ENCODE measurements at regions of chr3 and their contacts with region 1.

Region 1: GRCh38 chr3:38117748-38118420 is 19.0 kb downstream of the ACAA1 start:
- DNase-seq: peak; percentile 65
- ATAC-seq: peak; percentile 53
- H3K4me3 ChIP-seq: no peak overlapping the region
- H3K27ac ChIP-seq: peak overlapping the region; percentile 14
- H3K4me1 ChIP-seq: peaks cover 18% of the 10 kb centered on the region; the same call in 1 of the 2 replicates
- H3K27me3 ChIP-seq: peaks cover 0 to 8% of the 10 kb centered on the region in 2 experiments; a peak in 1 of 5 replicates
- CTCF ChIP-seq: peak; percentile 98
- EP300 ChIP-seq: no peak
- POLR2A ChIP-seq: peak; percentile 44 to 76; a peak in 3 of 4 replicates
- RAD21 ChIP-seq: peak; percentile 94

Region 2: DNA sequence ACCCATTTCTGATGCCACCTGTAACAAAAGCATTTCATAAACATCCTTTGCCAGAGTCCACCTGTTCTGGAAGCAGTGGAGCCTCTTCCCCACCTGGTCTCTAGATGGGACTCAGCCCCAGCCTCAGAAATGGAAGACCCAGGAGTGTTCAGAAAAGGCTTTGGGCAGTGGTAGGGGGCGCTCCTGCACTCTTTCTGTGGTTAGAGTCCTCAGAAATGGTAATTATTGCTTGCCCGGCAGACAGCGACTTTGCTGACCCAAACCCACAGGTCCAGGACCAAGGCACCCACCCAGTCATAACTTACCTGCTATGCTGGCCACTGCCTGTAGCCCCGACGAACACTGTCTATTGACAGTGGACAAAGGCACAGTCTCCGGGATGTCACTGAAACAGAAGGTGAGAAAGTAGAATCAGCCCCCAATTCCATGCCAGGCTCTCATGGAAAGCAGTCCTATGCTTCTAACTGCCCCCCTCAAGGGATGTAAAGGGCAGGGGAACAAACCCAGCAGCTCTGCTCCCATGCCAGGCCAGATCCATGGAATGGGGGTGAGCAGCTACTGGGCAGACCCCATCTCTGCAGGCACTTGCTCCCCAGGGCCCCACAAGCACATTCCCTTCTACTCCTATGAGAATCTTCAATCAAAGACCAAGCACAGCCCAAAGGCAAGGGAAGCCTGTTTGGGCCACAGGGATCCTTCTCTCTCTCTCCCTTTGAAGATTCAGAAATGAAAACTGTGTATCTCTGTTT is 13.9 kb after region 1 on chr3:
- CTCF ChIA-PET with region 1: no interaction called
- POLR2A ChIA-PET with region 1: interaction called, 87 read pairs
- in situ Hi-C with region 1: no loop called
- intact Hi-C with region 1: loop called (anchors 2 kb)
- DNase-seq: no peak
- ATAC-seq: peak; percentile 6; the same call in 2 of the 3 replicates
- H3K4me3 ChIP-seq: peak overlapping the region in 1 of 3 experiments; percentile 61; a peak in 2 of 6 replicates
- H3K27ac ChIP-seq: peak overlapping the region; percentile 97
- H3K4me1 ChIP-seq: peaks cover 86% of the 10 kb centered on the region
- H3K27me3 ChIP-seq: no peaks in the 10 kb centered on the region; a peak in 1 of 5 replicates
- CTCF ChIP-seq: peak; percentile 62
- EP300 ChIP-seq: no peak
- POLR2A ChIP-seq: no peak
- RAD21 ChIP-seq: peak; percentile 59; the same call in 1 of the 2 replicates

Region 3: DNA sequence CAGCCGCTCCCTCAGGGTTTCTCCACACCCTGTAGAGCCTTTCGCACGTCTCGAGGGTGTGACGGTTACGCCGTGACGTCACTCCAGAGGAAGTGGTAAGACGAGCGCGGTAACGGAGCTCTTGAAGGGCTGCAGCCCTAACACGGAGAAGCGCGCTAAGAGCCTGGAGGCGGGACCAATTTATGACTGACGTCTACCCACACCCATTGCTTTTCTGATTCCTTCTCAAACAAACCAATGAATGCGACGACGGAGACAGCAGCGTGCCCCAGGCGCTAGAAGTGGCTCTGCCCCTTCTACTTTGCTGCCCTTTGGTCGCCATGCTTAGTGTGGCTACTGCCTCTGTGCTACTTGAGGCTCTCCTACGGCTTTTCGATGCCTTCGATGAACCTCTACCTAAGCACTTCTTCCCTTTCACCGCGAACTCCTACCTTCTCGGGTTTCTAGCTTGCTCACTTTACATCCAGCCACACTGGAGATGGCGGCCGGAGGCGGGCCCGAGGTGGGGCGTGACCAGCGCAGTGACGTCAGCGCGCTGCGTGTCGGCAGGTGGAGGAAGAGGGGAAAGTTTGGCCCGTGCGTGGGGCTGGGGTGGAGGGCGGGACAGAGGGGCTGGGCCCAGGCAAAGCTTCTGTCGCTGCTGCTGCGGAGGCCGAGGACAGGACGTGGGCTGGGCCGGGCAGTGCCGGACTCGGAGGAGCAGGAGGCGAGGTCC is 47.2 kb after region 1 on chr3 and contains the start of gene OXSR1:
- CTCF ChIA-PET with region 1: no interaction called
- POLR2A ChIA-PET with region 1: interaction called, 25 read pairs
- in situ Hi-C with region 1: no loop called
- intact Hi-C with region 1: no loop called
- DNase-seq: peak; percentile 99
- ATAC-seq: peak; percentile 93
- H3K4me3 ChIP-seq: peak within 1 kb of the TSS; percentile 86 to 97 (median 90)
- H3K27ac ChIP-seq: peak within 1 kb of the TSS; percentile 96
- H3K4me1 ChIP-seq: peaks cover 48% of the 10 kb centered on the region
- H3K27me3 ChIP-seq: no peaks in the 10 kb centered on the region; a peak in 1 of 5 replicates
- CTCF ChIP-seq: 0 out of 2 replicates have a peak, but pooled peaks have one; percentile 0
- EP300 ChIP-seq: no peak; a peak in 1 of 4 replicates
- POLR2A ChIP-seq: peak; percentile 82 to 89
- RAD21 ChIP-seq: 0 out of 2 replicates have a peak, but pooled peaks have one; percentile 8
- total RNA-seq, gene OXSR1: 32.6 and 41.1 TPM in 2 replicates

Region 4: DNA sequence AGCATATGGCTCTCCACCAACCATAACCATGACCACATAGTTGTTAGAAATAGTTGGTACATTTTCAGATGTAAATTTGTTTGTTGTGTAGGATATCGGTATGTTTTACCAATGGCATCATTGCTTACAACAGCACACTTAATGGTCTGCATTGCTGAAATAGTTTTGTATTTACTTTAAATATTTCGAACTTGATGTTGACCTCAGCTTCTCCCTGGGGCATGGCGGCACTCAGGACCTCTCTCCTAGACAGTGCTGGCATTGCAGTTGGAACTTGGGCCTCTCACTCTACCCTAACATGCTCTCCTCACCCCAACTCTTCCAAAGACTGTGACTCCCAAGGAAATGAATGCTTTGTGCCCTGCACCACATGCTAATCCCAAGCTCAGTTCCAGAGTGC is 152.7 kb after region 1 on chr3:
- CTCF ChIA-PET with region 1: no interaction called
- POLR2A ChIA-PET with region 1: no interaction called
- in situ Hi-C with region 1: loop called (anchors 10 kb)
- intact Hi-C with region 1: no loop called
- DNase-seq: no peak
- ATAC-seq: no peak
- H3K4me3 ChIP-seq: no peak overlapping the region
- H3K27ac ChIP-seq: no peak overlapping the region
- H3K4me1 ChIP-seq: no peaks in the 10 kb centered on the region
- H3K27me3 ChIP-seq: peaks cover 0 to 4% of the 10 kb centered on the region in 2 experiments; a peak in 1 of 5 replicates
- CTCF ChIP-seq: no peak
- EP300 ChIP-seq: no peak
- POLR2A ChIP-seq: no peak
- RAD21 ChIP-seq: no peak

Region 5: DNA sequence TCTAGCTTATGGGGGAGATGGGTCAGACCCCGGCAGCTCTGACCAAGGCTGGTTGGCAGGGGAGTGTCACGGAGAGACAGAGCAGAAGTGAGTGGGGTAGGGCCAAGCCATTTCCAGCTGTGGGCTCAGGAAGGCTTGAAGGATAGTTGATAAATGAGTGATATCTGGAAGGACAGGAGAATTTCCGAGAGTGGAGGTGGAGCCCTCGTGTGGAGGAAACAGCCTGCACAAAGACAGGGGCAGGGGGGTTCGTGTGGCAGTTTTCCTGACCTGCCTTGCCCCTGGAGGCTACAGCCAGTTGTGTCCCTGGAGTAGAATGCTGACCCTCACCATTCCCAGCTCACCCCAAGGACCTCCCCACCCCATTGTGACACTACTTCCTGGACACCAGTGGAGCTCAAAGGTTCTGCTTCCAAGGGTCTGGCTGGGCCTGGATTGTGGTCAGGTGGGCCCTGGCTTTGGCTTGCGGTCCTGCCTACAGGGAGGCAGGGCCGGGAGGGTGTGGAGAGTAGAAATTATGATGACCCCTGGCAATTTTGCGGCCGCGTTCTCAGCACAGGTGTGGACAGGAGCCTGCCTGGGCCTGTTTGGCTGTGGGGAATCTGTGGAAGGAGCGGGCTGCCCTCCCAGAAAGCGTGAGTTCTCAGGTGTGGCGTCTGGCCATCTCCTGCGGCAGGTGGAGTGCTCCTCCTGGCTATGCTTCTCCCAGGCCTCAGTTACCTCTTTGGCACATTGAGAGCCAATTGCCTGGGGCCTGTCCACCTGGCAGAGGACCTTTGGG is 164.2 kb after region 1 on chr3 and contains the start of gene SLC22A14:
- CTCF ChIA-PET with region 1: no interaction called
- POLR2A ChIA-PET with region 1: no interaction called
- in situ Hi-C with region 1: loop called (anchors 10 kb)
- intact Hi-C with region 1: loop called (anchors 1 kb)
- DNase-seq: peak; percentile 16
- ATAC-seq: peak; percentile 89
- H3K4me3 ChIP-seq: no peak within 1 kb of the TSS
- H3K27ac ChIP-seq: no peak within 1 kb of the TSS
- H3K4me1 ChIP-seq: no peaks in the 10 kb centered on the region
- H3K27me3 ChIP-seq: peaks cover 0 to 19% of the 10 kb centered on the region in 2 experiments; a peak in 3 of 5 replicates
- CTCF ChIP-seq: peak; percentile 65
- EP300 ChIP-seq: no peak
- POLR2A ChIP-seq: no peak
- RAD21 ChIP-seq: peak; percentile 25; the same call in 1 of the 2 replicates
- total RNA-seq, gene SLC22A14: not detected in 2 replicates

Region 6: DNA sequence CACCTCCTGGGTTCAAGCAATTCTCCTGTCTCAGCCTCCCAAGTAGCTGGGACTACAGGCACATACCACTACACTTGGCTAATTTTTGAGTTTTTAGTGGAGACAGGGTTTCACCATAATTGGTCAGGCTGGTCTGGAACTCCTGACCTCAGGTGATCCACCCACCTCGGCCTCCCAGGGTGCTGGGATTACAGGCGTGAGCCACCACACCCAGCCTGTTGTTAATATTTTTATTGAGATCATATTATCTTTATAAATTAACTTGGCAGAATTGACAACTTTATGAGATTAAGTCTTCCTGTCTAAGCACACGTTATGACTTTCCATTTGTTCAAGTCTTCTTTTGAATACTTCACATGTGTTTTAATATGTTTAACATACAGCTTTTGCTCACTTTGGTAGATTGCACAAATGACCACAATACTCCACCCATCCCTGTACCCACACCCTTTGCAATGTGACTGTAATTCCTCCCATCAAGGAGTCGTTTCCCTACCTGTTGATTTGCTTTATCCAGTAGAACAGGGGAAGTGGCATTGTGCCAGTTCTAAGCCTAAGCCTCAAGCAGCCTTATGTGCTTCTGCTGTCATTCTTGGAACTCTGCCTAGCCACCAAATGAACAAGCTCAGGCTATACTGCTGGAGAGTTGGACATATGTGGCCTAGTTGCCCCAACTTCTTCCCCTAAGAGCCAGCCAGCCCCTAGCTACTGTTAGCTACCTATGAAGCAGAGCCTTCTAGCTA is 236.9 kb after region 1 on chr3:
- CTCF ChIA-PET with region 1: no interaction called
- POLR2A ChIA-PET with region 1: no interaction called
- in situ Hi-C with region 1: no loop called
- intact Hi-C with region 1: no loop called
- DNase-seq: no peak
- ATAC-seq: no peak
- H3K4me3 ChIP-seq: no peak overlapping the region
- H3K27ac ChIP-seq: no peak overlapping the region
- H3K4me1 ChIP-seq: peaks cover 22% of the 10 kb centered on the region
- H3K27me3 ChIP-seq: no peaks in the 10 kb centered on the region
- CTCF ChIP-seq: no peak
- EP300 ChIP-seq: no peak
- POLR2A ChIP-seq: no peak
- RAD21 ChIP-seq: no peak